ENCODE measurements at regions of chr10 and their contacts with region 1.

Region 1: DNA sequence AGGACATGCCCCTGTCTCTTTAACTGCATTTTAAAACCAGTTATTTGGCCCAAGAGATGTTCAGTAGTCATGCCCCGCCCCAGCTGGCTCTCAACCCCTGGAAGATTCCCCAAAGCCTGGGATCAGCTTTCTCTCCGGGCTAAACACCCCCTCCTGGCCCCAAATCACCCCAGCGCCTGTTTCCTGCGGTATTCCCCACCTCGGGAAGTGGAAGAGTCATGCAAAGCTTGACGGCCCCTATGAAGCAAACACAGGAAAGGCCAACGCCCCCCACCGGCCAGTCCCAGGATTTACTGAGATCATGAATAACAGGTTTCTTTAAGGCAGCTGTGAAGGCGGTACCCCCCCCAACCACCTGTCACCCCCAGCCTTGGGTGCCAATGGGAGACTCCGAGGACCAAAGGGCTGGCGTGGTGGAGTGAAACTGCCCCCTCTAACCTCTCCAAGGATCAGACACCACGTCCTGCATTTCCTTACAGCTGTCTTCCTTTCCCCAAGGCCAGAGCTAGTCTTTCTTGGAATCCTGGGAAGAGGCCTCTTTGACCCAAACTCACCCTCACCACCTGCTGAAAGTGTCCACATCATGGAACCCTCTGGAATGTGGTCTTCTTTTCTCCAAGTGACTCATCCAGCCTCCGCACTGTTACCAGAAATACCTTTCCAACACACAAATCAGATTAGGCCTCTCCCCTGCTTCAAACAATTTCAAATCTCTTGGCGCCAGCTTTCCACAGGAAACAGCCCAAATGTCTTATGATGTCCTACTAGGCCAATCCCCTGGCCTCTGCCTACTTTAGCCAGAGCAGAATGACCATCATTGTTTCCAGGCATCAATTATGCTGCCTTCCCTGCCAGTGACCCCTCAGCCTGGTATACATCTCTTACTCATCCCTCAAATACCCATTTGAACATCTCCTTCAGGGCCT is 301.5 kb downstream of the ZEB1 start:
- DNase-seq: peak; percentile 85

Region 2: DNA sequence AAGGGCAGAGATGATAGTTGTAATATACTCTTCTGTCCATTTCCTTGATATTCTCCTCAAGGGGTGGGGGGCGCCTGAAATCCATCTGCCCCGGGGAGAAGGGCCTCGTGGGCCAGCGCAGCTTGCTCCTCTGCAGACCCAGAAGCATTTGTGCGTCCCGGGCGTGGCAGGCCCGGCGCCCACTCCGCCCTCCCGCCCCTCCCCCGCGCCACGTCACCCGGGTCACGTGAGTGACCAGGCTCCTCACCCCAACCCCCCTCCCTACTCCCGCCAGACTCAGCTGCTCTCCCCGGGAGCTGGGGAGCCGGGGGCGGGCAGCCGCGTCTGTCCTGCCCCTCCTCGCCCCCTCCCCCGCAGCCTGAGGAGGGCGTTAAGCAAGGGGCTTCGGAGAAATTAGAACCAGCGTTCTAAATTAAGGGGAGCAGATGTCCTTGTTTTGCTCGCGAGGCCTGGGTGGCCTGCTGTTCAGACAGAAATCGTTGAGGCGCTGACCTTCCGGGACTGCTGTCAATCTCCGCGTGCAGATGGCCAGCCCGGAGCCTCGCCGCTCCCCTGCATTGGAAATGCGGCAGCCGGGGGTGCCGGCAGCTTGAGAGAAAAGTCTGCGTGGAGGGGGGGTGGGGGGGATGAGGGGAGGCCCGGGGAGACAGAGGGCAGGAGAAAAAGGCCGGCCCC is 486.7 kb before region 1 on chr10:
- intact Hi-C with region 1: no loop called
- DNase-seq: peak; percentile 93

Region 3: DNA sequence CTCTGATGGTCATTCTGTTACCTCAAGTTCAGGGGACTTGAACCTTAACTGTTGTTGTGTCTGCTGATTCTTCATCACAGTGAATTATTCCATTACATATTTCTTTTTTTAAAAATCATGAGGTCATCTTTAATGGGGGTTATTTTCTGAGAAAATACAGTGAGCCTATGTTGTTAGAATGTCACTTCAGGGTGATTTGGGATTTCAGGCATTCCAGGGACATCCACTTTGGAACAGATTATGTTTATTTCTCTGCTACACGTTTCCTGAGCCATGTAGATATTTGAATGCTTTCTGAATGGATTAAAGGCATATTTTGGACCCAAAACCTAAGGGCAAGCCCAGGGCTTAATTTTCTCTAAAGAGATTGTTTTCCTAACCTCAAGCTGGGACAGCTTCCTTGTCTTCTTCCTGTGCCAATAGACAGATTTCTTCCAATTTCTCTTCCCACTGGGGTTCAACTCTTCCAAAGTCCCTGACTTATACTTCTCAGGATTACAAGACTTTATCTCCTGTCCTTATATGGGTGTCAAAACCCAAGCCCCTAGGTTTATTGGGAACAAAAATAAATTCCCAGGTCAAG is 36.5 kb after region 1 on chr10:
- intact Hi-C with region 1: loop called (anchors 5 kb)
- DNase-seq: no peak

Measured in cardiac septum (tissue), 1 donor.